GM10248 (cell line): ENCODE measurements at regions of chr16 and their contacts with region 1.

Region 1: GRCh38 chr16:29848420-29849297 is 14.4 kb downstream of the CDIPT start:
- DNase-seq: peak; percentile 83
- CTCF ChIP-seq: peak; percentile 93

Region 2: DNA sequence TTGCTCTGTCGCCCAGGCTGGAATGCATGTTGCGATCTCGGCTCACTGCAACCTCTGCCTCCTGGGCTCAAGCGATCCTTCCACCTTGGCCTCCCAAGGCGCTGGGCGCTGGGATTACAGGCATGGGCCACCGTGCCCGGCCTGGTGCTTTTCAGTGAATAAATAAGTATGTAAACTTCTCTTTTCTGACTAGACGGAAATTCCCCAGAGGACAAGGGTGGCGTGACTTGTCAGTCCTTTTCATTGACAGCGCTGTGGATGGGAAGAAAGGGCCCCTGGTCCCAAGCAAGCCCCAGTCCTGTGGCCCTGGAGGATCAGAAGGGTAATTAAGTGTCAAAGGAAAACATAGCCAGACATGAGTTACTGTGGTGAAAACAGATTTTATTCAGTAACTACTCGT is 195.2 kb before region 1 on chr16:
- CTCF ChIA-PET with region 1: no interaction called
- POLR2A ChIA-PET with region 1: no interaction called
- DNase-seq: peak; percentile 43
- CTCF ChIP-seq: no peak

Region 3: GRCh38 chr16:29694384-29695195 is 154.1 kb before region 1 on chr16:
- CTCF ChIA-PET with region 1: interaction called, 32 read pairs
- POLR2A ChIA-PET with region 1: no interaction called
- DNase-seq: no peak
- CTCF ChIP-seq: no peak

Region 4: DNA sequence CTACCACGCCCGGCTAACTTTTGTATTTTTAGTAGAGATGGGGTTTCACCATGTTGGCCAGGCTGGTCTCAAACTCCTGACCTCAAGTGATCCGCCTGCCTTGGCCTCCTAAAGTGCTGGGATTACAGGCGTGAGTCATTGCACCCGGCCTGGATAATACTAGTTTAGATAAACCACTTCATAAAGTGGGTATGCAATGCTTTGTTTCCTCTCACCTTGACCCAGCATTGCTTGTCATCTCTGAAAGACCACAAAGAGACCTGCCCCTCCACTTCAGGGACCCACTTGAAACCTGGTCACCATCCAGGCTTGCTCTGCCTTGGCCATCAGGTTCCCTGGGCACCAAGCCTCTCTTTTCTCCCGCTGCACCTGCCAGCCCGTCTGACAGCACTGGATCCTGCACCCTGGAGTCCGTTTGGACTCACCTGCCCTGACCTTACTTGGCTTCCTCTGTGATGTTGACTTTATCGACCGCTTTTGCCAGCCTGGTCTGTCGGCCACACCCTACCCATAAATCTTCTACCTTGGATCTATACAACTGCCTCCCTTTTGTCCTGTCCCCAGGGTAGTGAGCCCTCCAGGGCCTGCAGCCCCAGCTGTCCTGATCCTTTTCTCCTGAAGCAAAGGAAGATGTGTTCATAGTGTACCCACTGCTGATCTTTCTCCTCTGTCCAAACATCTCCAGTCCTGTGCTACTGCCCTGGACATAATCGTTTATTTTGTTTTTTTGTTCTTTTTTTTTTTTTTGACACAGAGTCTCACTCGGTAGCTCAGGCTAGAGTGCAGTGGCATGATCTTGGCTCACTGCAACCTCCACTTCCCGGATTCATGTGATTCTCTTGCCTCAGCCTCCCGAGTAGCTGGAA is 83.3 kb before region 1 on chr16:
- CTCF ChIA-PET with region 1: no interaction called
- POLR2A ChIA-PET with region 1: no interaction called
- DNase-seq: no peak
- CTCF ChIP-seq: no peak

Region 5: DNA sequence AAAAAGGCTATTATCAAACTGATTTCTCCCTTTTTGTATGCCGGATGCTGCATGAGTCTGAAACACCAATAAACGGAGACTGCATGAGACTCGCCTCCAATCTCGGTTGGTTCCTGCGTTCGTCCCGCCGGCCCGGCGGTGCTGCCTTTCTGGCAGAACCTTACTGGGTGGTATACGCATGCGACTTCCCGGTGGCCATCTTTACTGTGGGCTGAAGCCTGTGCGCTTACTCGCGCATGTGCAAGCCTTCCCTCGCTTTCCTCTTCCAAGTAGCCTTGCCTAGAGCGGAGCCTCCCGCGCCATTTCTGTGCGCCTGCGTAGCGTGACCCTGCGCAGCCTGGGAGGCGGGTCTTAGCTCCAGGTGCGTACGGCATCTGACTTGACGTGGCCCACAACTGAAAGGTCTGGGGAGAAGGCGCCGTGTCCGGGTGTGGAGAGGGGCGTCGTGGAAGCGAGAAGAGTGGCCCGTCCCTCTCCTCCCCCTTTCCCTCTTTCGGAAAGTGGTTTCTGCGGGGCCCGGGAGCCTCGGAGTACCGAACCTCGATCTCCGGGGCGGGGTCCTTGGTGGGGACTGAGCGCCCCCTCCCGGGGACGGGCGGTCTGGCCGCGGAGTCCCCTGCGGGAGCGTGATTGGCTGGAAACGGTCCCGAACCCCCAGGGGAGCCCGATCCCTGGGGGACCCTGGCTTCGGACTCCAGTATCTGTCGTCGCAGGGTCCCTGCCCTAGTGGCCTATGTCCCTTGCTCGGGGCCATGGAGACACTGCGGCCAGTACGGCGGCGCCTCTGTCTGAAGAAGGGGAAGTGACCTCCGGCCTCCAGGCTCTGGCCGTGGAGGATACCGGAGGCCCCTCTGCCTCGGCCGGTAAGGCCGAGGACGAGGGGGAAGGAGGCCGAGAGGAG is 32.6 kb before region 1 on chr16 and contains the start of gene PAGR1:
- CTCF ChIA-PET with region 1: interaction called, 93 read pairs
- POLR2A ChIA-PET with region 1: no interaction called
- DNase-seq: peak; percentile 96
- CTCF ChIP-seq: peak; percentile 97

Region 6: DNA sequence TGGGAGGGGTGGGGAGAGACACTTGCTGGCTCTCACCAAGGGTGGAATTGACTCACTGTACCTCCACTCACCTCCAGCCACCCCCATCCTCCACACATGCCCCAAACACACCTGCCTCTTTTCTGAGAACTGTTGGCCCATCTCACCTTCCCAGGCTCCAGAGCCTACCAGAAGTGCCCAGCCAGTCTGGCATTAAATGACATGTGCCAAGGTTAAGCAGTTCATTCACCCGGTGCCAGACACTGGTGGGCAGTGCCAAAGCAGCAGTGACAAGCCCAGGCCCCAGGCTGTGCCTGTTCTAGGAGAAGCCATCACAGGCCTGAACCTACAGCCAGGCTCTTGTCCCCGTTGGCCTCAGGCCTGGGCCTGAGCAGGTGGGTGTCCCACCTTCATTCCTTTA is 17.2 kb before region 1 on chr16:
- CTCF ChIA-PET with region 1: interaction called, 93 read pairs
- POLR2A ChIA-PET with region 1: interaction called, 3 read pairs
- DNase-seq: no peak
- CTCF ChIP-seq: no peak

Region 7: GRCh38 chr16:29862884-29863668 is 14.4 kb after region 1 on chr16 and contains the start of gene CDIPT:
- CTCF ChIA-PET with region 1: interaction called, 40 read pairs
- POLR2A ChIA-PET with region 1: interaction called, 6 read pairs
- DNase-seq: peak; percentile 95
- CTCF ChIP-seq: peak; percentile 91

Region 8: GRCh38 chr16:29881050-29881449 is 32.4 kb after region 1 on chr16:
- CTCF ChIA-PET with region 1: interaction called, 10 read pairs
- POLR2A ChIA-PET with region 1: no interaction called
- DNase-seq: no peak
- CTCF ChIP-seq: no peak

Region 9: GRCh38 chr16:29973384-29974246 is 125.0 kb after region 1 on chr16 and contains the start of gene TAOK2:
- CTCF ChIA-PET with region 1: interaction called, 10 read pairs
- POLR2A ChIA-PET with region 1: no interaction called
- DNase-seq: peak; percentile 100
- CTCF ChIP-seq: no peak

Region 10: GRCh38 chr16:30183233-30184095 is 334.8 kb after region 1 on chr16 and contains the start of gene CORO1A:
- CTCF ChIA-PET with region 1: no interaction called
- POLR2A ChIA-PET with region 1: no interaction called
- DNase-seq: peak; percentile 86
- CTCF ChIP-seq: no peak